Activated CD8-positive, alpha-beta memory T cell treated with anti-CD3 and anti-CD28 coated beads, Interleukin-2, amount 10 ng/mL, durations not matched to agents 7 days and 5 days (primary cell): ENCODE measurements at regions of chr9 and their contacts with region 1.

Region 1: DNA sequence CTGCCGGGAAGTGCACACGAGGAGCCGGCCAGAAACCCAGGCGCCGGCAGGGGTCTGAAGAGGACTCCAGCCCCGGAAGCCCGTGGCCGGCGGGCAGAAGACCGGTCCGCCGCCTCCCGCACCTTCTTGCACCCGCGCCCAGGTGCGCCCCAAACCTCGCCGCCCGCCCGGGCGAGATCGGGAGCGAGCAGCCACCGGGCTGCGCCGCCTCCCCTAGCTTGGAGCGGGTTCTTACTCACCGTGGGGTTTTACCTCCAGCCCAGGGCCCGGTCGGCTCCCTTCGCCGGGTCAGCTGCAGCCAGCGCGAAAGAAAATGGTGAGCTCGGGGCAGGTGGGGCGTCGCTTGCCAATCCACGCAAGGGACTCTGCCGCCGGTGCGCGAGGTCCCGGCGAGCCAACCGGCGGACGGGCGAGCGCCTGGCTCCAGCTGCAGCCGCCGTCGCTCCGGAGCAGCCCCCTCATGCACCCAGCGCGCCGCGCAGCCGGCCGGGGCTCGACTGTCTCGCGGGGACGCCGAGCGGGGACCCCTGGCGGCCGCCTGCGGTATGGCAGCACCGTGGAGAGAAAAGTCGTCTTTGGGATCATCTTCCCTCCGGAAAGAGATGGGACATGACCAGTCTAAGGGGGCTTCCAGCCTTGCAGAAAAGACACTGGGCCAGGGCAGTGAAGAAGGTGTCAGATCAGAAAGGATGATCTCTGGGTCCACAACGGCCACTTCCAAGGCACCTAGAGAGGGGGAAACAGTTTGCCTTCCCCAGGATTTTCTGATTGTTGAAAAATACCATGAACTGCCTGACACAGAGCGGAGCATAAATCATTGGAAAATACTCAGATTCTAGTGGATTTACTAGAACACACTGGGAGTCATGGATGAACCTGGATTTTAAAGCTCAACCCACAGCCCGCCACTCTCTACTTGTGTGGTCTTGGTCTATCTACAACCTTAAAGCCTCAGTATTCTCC is at the start of gene MOB3B:
- DNase-seq: peak; percentile 77
- ATAC-seq: peak; percentile 91
- H3K4me3 Mint-ChIP-seq: peak within 1 kb of the TSS; percentile 81
- H3K27ac Mint-ChIP-seq: no peak within 1 kb of the TSS
- H3K4me1 Mint-ChIP-seq: peaks cover 7% of the 10 kb centered on the region
- H3K27me3 Mint-ChIP-seq: peaks cover 46% of the 10 kb centered on the region
- total RNA-seq, gene MOB3B: 0.29 to 0.70 TPM

Region 2: DNA sequence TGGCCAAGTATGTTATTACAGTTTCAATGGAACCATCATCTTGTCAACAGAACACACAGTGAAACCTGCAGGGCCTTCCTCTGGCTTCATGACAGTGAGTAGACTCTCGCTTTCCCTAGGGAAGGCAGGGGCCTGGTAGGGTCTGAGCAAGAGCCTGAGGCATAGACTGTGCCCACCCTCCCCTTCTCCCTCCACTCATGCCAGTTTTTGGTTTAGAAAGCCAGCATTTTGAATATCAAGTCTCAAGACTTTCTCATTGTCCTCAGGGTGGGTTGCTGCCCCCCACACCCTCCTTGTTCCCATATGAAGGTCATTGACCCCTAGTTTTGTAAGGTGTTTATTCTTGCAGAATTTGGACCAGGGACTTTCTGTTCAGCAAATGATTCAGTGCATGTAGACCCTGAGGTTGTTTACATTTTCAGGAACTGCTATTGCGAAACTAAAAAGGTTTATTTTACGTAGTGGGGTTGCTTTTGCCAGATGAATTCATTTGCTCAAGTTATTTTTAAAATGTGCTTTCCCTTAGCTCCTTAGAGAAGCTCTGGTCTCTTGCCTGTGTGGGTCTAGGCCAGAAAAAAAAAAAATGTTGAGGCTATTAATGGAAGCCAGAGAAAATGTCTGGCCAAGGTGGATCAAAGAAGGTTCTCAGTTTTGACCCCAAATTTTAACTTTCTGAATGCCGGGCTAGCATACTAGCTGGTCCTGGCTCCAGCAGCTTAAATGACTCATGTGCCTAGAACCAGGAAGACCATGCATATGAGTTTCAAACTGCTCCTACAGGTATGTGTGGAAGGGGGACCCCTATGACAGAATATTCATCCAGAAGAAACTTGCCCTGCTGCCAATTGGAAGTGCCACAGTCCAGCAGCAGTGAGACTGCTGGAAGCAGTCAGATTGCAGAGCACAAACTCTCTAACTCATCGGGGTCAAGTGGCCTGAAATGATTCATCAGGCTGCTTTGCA is 10.2 kb after region 1 on chr9:
- CTCF ChIA-PET with region 1: interaction called, 12 read pairs
- DNase-seq: no peak
- ATAC-seq: no peak
- H3K4me3 Mint-ChIP-seq: no peak overlapping the region
- H3K27ac Mint-ChIP-seq: no peak overlapping the region
- H3K4me1 Mint-ChIP-seq: no peaks in the 10 kb centered on the region
- H3K27me3 Mint-ChIP-seq: no peaks in the 10 kb centered on the region

Region 3: GRCh38 chr9:27703216-27703980 is 173.8 kb after region 1 on chr9:
- CTCF ChIA-PET with region 1: no interaction called
- DNase-seq: no peak
- ATAC-seq: no peak
- H3K4me3 Mint-ChIP-seq: no peak overlapping the region
- H3K27ac Mint-ChIP-seq: no peak overlapping the region
- H3K4me1 Mint-ChIP-seq: no peaks in the 10 kb centered on the region
- H3K27me3 Mint-ChIP-seq: no peaks in the 10 kb centered on the region

Region 4: DNA sequence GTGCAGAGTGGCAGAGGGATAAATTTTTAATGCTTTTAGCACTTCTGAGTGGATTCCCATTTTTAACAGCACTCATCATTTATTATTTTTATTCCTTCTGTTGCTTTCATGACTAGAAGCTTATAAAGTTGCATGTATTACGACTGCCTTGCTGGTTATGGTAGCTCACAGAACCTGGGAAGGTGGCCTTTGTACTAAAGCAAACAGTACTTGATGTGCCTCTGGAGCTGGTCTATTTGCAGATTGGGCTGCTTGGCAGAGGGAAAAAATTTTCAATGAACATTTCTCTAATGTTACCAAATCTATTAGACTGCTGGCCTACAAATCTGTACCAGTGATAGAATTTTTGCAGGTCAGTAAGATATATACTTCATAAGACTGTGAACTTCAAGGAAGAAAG is 318.2 kb after region 1 on chr9:
- CTCF ChIA-PET with region 1: no interaction called
- DNase-seq: no peak
- ATAC-seq: no peak
- H3K4me3 Mint-ChIP-seq: no peak overlapping the region
- H3K27ac Mint-ChIP-seq: no peak overlapping the region
- H3K4me1 Mint-ChIP-seq: no peaks in the 10 kb centered on the region
- H3K27me3 Mint-ChIP-seq: no peaks in the 10 kb centered on the region